ENCODE measurements at regions of chr10 and their contacts with region 1.

Region 1: DNA sequence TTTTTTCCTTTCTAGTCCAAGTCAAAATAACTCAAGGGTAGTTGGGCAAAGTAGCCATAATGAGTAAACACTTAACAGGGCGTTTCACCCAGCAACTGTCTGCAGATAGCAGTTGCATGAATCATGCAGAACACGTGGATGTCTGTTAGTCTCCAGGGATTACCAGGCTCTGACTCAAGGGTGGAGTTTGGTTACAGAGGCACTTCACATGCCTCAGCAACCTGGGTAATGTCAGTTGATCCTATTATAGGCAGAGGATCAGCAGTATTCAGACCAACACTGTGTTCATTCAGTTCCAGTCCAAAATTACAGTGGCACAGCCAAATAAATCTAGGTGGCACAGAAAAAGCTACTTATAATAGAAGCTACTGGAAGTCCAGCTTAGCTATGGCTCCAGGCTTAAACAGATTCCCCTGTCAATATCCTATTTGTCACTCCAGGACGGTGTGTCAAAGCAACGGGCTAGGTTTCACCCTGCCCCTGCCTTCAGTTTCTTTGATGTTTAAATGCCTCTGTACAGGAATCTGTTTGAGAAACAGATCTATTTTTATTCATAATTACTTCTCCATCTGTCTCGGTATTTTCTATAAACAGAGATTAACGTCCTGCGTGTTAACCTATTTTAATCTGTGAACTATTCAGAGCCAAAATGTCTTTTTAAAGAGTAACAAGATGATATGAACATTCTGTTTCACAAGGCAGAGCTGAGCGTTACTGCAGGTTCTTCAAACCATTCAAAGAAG is 162.7 kb upstream of the AKR1E2 start:
- DNase-seq: peak in 1 of 2 donors; percentile 88
- ATAC-seq: peak; percentile 84 to 95 (median 94)
- H3K4me3 ChIP-seq: peak overlapping the region in 5 of 10 donors; percentile 4 to 22 (median 13)
- H3K27ac ChIP-seq: peak overlapping the region; percentile 87 to 96 (median 92)
- H3K4me1 ChIP-seq: peaks cover 0 to 52% (median 36%) of the 10 kb centered on the region in 9 donors
- H3K27me3 ChIP-seq: no peaks in the 10 kb centered on the region
- CTCF ChIP-seq: no peak

Region 2: GRCh38 chr10:3887885-3888476 is 775.4 kb before region 1 on chr10:
- intact Hi-C with region 1: loop called in 1 of 10 experiments (anchors 10 kb)
- DNase-seq: peak in 1 of 2 donors; percentile 42
- ATAC-seq: peak in 6 of 8 donors; percentile 30 to 50 (median 45)
- H3K4me3 ChIP-seq: no peak overlapping the region
- H3K27ac ChIP-seq: peak overlapping the region in 8 of 10 donors; percentile 62 to 86 (median 78)
- H3K4me1 ChIP-seq: peaks cover 0 to 40% (median 25%) of the 10 kb centered on the region in 9 donors
- H3K27me3 ChIP-seq: no peaks in the 10 kb centered on the region
- CTCF ChIP-seq: no peak

Region 3: DNA sequence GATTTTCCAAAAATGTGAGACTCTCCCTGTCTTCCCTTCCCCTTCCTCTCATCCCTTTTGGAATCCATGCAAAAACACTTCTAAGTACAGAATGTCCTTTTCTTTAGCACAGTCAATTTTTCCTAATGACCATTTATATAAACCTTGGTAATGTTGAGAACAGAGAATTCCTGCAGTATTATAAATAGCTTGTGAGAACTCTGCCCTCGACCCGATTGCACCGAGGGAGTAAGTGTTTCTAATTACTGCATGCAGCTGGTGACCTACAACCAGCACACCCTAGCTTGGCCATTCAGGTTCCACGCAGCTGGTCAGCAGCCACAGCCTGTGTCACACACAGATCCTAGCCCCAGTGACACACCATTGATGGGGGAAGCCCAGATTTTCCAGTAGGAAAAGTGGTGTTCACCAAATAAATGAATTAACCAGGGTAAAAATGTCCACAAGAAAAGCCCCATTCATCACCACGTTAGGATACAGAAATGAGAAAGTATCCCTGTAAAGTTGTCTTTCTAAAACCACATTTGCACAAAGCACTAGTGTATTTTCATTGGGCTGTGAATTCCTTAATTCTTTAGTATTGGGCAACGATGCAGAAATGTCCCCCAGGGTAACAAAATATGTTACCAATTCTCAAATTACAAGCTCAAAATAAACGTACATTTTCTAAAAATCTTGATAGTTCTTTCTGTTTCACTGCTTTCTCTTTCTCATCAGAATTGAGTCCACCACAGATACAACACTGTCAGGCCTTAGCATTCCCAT is 379.3 kb before region 1 on chr10:
- intact Hi-C with region 1: loop called in 1 of 10 experiments (anchors 5 kb)
- DNase-seq: peak; percentile 55 to 80
- ATAC-seq: peak; percentile 88 to 95 (median 93)
- H3K4me3 ChIP-seq: no peak overlapping the region
- H3K27ac ChIP-seq: peak overlapping the region; percentile 50 to 78 (median 68)
- H3K4me1 ChIP-seq: peaks cover 3 to 61% (median 39%) of the 10 kb centered on the region in 9 donors
- H3K27me3 ChIP-seq: no peaks in the 10 kb centered on the region
- CTCF ChIP-seq: no peak

Region 4: DNA sequence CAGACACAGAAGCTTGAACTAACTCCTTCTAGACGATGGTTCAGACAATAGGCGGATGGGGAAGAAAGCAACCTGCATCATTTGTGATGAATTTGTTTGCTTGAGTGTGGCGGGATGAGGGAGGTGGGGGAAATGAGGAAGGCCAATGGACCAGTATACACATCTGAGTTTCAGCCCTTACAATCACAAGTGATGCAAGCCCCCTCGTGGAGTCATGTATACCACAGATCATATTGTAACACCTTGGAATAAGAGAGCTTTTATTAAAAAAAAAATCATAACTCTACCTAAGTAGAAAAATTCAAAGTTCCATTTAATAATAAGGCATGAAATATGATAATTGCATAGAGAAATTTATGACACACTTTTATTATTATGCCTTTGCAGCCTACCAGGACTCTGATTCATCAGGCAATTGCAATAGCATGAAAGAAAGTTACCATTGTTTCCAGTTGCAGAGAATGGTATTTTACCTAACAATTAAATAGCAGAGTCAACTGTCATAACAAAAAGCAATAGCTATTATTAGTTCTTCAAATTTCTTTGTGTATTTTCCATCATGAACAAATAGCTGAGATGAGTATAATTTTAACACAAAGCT is 67.5 kb before region 1 on chr10:
- intact Hi-C with region 1: no loop called
- DNase-seq: no peak
- ATAC-seq: no peak
- H3K4me3 ChIP-seq: no peak overlapping the region
- H3K27ac ChIP-seq: no peak overlapping the region
- H3K4me1 ChIP-seq: no peaks in the 10 kb centered on the region
- H3K27me3 ChIP-seq: no peaks in the 10 kb centered on the region
- CTCF ChIP-seq: no peak

Region 5: DNA sequence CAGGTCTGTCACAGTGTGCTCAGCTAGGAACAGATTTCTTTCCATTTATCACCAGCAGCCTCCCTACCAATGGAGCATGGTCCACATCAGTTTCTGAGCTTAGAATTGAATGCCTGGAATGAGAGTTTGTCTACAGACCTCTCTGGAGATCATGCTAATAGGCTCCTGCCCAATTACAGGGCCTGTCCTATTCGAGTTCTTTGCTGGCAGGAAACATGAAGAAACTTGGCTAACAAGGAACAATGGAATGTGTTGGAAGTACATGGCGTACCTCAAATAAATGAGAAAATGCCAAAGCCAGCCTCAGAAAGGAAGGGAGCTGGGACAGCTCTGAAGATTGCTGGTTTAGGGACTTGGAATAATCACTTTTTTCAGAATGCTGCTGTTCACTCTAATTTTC is 23.4 kb before region 1 on chr10:
- intact Hi-C with region 1: loop called in 1 of 10 experiments (anchors 1 kb)
- DNase-seq: peak in 1 of 2 donors; percentile 21
- ATAC-seq: peak; percentile 49 to 95 (median 86)
- H3K4me3 ChIP-seq: no peak overlapping the region
- H3K27ac ChIP-seq: peak overlapping the region; percentile 15 to 80 (median 58)
- H3K4me1 ChIP-seq: peaks cover 0 to 21% (median 15%) of the 10 kb centered on the region in 9 donors
- H3K27me3 ChIP-seq: no peaks in the 10 kb centered on the region
- CTCF ChIP-seq: no peak

Region 6: DNA sequence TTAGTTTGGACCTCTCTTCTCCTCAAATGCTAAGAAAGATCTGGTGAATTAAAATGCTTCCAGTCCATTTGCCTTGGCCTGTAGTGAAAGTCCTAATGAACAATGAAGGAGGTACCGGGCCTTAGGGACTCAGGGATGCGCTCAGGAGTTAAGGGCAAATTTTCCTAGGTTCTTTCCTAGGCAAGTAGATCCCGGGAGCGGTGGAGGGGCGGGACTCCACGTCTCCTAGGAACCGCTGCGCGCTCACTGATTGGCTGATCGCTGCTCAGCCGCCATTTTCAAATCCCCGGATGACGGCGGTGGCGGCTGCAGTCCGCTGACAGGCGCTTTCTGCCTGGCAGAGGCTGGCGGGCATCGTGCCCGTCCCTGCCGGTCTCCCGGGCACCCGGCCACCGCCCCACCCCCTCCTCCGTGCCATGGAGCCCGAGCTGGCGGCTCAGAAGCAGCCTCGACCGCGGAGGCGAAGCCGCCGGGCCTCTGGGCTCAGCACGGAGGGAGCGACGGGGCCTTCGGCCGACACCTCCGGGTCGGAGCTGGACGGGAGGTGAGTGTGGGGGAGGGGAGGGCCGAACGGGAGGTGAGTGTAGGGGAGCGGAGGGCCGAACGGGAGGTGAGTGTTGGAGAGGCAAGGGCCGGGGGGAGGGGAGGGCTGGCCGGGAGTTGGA is 749.1 kb after region 1 on chr10 and contains the start of gene NET1:
- intact Hi-C with region 1: no loop called
- DNase-seq: peak; percentile 86 to 89
- ATAC-seq: peak; percentile 98 to 99 (median 99)
- H3K4me3 ChIP-seq: peak within 1 kb of the TSS; percentile 68 to 95 (median 78)
- H3K27ac ChIP-seq: peak within 1 kb of the TSS in 9 of 10 donors; percentile 45 to 75 (median 64)
- H3K4me1 ChIP-seq: peaks cover 0 to 15% (median 9%) of the 10 kb centered on the region in 9 donors
- H3K27me3 ChIP-seq: no peaks in the 10 kb centered on the region
- CTCF ChIP-seq: no peak
- total RNA-seq, gene NET1: 13.4 to 22.6 (median 17.6) TPM